GM18951 (cell line): ENCODE measurements at regions of chr4 and their contacts with region 1.

Region 1: DNA sequence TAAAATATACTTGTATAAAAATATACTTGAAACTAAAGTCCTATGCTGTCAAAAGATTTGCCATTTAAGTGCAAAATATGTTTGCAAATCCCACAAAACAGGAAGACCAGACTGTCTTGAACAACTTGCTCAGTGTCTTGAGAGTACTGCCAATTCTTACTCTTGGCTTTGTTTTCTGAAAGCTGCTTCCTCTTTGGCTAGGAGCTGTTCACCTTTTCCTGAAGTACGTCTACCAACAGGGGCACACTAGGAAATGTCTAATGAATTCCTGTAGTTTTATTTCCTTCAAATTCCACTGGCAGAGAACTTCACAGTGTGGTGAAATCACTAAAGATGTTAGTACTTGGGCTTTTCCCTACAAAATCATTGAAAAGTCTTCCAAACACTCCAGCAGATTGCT is 46.4 kb upstream of the ABCG2 start:
- POLR2A ChIP-seq: no peak

Region 2: GRCh38 chr4:88033309-88033708 is 171.6 kb before region 1 on chr4:
- in situ Hi-C with region 1: loop called (anchors 10 kb)
- POLR2A ChIP-seq: no peak